Adrenal gland (tissue), 19 donors: ENCODE measurements at regions of chr10 and their contacts with region 1.

Region 1: GRCh38 chr10:28875549-28876081 is 198.3 kb downstream of the BAMBI start:
- DNase-seq: peak in 3 of 7 donors; percentile 15 to 30 (median 18)
- H3K4me3 ChIP-seq: no peak overlapping the region
- H3K27ac ChIP-seq: no peak overlapping the region
- H3K4me1 ChIP-seq: peaks cover 10 to 20% of the 10 kb centered on the region in 2 donors
- H3K27me3 ChIP-seq: no peaks in the 10 kb centered on the region
- CTCF ChIP-seq: no peak
- POLR2A ChIP-seq: no peak

Region 2: GRCh38 chr10:28939281-28940157 is 63.9 kb after region 1 on chr10:
- intact Hi-C with region 1: loop called in 1 of 2 experiments (anchors 10 kb)
- DNase-seq: peak in 6 of 7 donors; percentile 33 to 76 (median 40)
- H3K4me3 ChIP-seq: no peak overlapping the region
- H3K27ac ChIP-seq: peak overlapping the region in 1 of 5 donors; percentile 45
- H3K4me1 ChIP-seq: no peaks in the 10 kb centered on the region
- H3K27me3 ChIP-seq: no peaks in the 10 kb centered on the region
- CTCF ChIP-seq: no peak
- POLR2A ChIP-seq: no peak